CD4-positive, alpha-beta memory T cell (primary cell): ENCODE measurements at regions of chr3 and their contacts with region 1.

Region 1: DNA sequence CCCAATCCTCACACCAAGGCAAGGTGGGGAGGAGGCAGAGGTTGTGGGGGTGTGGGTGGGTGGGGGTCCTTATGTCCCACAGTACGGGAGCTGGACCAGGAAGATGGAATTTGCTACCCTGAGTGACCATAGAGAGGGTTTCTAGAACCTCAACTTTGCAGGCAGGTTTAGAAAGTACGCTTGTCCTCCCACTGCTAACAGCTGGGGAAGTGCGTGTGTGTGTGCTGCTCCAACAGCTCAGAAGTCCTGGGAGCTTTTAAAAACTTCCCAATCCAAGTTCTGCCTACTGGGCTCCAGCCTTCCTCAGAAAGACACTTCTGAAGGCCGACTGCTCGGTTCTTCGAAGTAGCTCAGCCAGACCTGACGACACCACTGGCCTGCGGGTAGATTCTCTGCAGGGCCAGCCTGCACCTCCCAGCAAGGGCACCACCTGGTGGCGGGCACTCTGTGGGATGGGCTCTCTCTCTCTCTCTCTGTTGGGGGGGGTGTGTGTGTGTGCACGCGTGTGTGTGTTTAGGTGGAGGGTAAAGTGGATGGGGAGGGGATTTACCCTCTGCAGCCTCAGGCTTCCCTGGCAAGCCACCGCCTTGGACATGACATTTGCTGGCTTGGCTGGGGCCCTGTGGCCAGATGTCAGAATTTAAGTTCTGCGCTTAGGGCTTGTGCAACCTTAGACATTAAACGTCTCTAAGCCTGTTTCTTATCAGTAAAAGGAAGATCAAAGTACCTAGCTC is 15.6 kb downstream of the TMEM158 start:
- DNase-seq: peak; percentile 73 to 82 (median 76)
- H3K4me3 ChIP-seq: no peak overlapping the region
- H3K4me3 Mint-ChIP-seq: peak overlapping the region in 2 of 8 donors; percentile 21 to 29
- H3K27ac ChIP-seq: no peak overlapping the region
- H3K27ac Mint-ChIP-seq: peak overlapping the region in 2 of 7 donors; percentile 6 to 77
- H3K4me1 ChIP-seq: peaks cover 22% of the 10 kb centered on the region
- H3K4me1 Mint-ChIP-seq: peaks cover 9 to 28% (median 20%) of the 10 kb centered on the region in 4 donors
- H3K27me3 ChIP-seq: peaks cover 5% of the 10 kb centered on the region
- H3K27me3 Mint-ChIP-seq: peaks cover 0 to 9% of the 10 kb centered on the region in 2 donors

Region 2: GRCh38 chr3:45055411-45056143 is 154.9 kb before region 1 on chr3:
- CTCF ChIA-PET with region 1: interaction called, 688 read pairs
- POLR2A ChIA-PET with region 1: no interaction called
- intact Hi-C with region 1: no loop called
- DNase-seq: no peak
- H3K4me3 ChIP-seq: no peak overlapping the region
- H3K4me3 Mint-ChIP-seq: no peak overlapping the region
- H3K27ac ChIP-seq: no peak overlapping the region
- H3K27ac Mint-ChIP-seq: no peak overlapping the region
- H3K4me1 ChIP-seq: no peaks in the 10 kb centered on the region
- H3K4me1 Mint-ChIP-seq: peaks cover 0 to 7% (median 4%) of the 10 kb centered on the region in 4 donors
- H3K27me3 ChIP-seq: no peaks in the 10 kb centered on the region
- H3K27me3 Mint-ChIP-seq: peaks cover 6 to 11% of the 10 kb centered on the region in 2 donors

Region 3: DNA sequence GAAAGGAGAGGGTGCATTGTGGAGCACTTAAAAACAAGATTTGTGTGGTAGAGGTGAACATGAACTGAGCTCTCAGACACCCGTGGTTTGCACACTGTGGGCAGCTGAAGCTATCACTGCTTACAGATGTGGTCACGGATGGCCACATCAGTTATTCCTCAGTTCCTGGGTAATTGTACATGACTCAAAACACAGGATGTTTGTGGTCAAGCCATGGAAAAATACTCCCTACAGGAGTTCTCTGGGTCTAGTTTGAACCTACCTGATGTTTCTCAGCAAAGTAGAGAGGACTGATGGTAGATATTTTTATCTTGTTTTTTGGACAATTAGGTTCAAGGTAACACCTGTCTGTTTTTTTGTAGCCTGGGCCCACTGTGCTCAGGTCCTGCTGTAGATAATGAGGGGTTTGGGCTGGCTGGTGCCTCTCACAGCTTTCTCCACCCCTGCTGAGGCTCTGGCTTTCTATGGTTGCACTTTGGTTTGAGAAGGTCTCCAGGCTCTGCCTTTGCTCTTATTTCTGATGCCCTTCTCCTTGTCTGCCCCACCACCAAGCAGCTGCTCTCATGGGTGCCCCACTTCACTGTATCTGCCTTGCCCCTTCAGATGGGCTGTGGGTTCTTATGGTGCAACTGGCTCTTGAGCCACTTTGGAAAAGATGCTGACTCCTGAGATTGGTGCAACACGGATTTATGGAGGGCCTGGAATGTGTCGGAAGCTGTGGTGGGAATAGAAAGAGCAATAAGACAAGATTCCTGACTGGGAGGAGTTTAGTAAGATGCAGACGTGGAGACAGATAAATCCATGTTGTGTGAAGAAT is 104.4 kb before region 1 on chr3:
- CTCF ChIA-PET with region 1: interaction called, 19 read pairs
- POLR2A ChIA-PET with region 1: interaction called, 4 read pairs
- intact Hi-C with region 1: loop called (anchors 5 kb)
- DNase-seq: peak; percentile 71 to 78 (median 75)
- H3K4me3 ChIP-seq: no peak overlapping the region
- H3K4me3 Mint-ChIP-seq: peak overlapping the region; percentile 9 to 74 (median 60)
- H3K27ac ChIP-seq: no peak overlapping the region
- H3K27ac Mint-ChIP-seq: peak overlapping the region; percentile 19 to 88 (median 73)
- H3K4me1 ChIP-seq: peaks cover 70% of the 10 kb centered on the region
- H3K4me1 Mint-ChIP-seq: peaks cover 50 to 75% (median 65%) of the 10 kb centered on the region in 4 donors
- H3K27me3 ChIP-seq: peaks cover 2% of the 10 kb centered on the region
- H3K27me3 Mint-ChIP-seq: peaks cover 5% of the 10 kb centered on the region in 2 donors

Region 4: DNA sequence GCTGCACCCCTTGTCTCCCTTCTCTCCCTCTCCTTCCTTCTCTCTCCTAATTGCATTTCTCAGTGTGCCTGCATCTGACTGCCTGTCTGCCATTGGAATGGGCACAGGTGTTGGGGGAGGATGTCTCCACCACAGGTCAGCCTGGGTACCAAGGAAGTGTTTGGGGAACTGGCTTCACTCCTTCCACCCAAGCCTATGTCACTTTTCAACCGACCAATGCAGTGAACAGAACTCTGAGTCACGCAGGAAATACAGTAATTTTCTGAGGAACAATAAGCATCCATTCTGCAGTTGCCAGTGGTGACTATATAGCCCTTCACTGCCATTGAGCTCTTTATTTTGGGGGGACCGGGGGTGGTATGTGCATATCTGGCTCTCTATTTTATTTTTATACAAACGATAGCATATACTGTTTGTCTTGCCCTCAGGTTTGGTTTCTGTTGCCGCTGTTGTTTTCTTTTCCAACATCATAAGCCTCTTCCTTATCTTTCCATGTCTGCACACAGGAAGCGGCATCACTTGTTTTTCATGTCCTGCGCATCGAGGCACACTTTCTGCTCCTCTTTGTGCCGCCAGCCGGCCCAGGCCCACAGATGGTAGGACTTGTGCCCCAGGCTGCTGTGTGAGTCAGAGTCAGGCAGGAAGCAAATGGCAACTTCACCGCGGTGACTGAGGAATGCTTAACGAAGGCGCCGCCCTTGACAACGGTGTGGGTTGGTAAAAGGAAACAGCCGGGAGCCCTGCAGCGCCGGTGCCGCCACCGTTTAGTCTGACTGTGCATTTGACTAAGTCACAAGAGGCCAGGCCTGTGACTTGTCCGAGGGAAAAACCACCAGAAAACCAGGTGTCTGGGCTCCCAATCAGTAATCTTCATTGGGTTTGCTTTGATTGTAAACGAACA is 43.2 kb before region 1 on chr3:
- CTCF ChIA-PET with region 1: interaction called, 18 read pairs
- POLR2A ChIA-PET with region 1: interaction called, 4 read pairs
- intact Hi-C with region 1: loop called (anchors 2 kb)
- DNase-seq: peak; percentile 71 to 90 (median 77)
- H3K4me3 ChIP-seq: peak overlapping the region; percentile 8 to 21
- H3K4me3 Mint-ChIP-seq: peak overlapping the region; percentile 67 to 91 (median 82)
- H3K27ac ChIP-seq: peak overlapping the region; percentile 39
- H3K27ac Mint-ChIP-seq: peak overlapping the region; percentile 78 to 99 (median 95)
- H3K4me1 ChIP-seq: peaks cover 24% of the 10 kb centered on the region
- H3K4me1 Mint-ChIP-seq: peaks cover 15 to 35% (median 22%) of the 10 kb centered on the region in 4 donors
- H3K27me3 ChIP-seq: no peaks in the 10 kb centered on the region
- H3K27me3 Mint-ChIP-seq: peaks cover 0 to 2% of the 10 kb centered on the region in 2 donors

Region 5: GRCh38 chr3:45191924-45192417 is 18.5 kb before region 1 on chr3:
- CTCF ChIA-PET with region 1: interaction called, 35 read pairs
- POLR2A ChIA-PET with region 1: no interaction called
- intact Hi-C with region 1: no loop called
- DNase-seq: no peak
- H3K4me3 ChIP-seq: no peak overlapping the region
- H3K4me3 Mint-ChIP-seq: no peak overlapping the region
- H3K27ac ChIP-seq: no peak overlapping the region
- H3K27ac Mint-ChIP-seq: no peak overlapping the region
- H3K4me1 ChIP-seq: no peaks in the 10 kb centered on the region
- H3K4me1 Mint-ChIP-seq: no peaks in the 10 kb centered on the region
- H3K27me3 ChIP-seq: no peaks in the 10 kb centered on the region
- H3K27me3 Mint-ChIP-seq: peaks cover 6 to 7% of the 10 kb centered on the region in 2 donors

Region 6: GRCh38 chr3:45224824-45225464 is 14.5 kb after region 1 on chr3:
- CTCF ChIA-PET with region 1: interaction called, 14 read pairs
- POLR2A ChIA-PET with region 1: interaction called, 4 read pairs
- intact Hi-C with region 1: no loop called
- DNase-seq: peak in 2 of 5 donors; percentile 8 to 46
- H3K4me3 ChIP-seq: no peak overlapping the region
- H3K4me3 Mint-ChIP-seq: peak overlapping the region; percentile 79 to 90 (median 88)
- H3K27ac ChIP-seq: no peak overlapping the region
- H3K27ac Mint-ChIP-seq: peak overlapping the region in 2 of 7 donors; percentile 66 to 82
- H3K4me1 ChIP-seq: peaks cover 11% of the 10 kb centered on the region
- H3K4me1 Mint-ChIP-seq: peaks cover 7 to 17% (median 13%) of the 10 kb centered on the region in 4 donors
- H3K27me3 ChIP-seq: peaks cover 46% of the 10 kb centered on the region
- H3K27me3 Mint-ChIP-seq: peaks cover 52 to 69% of the 10 kb centered on the region in 2 donors

Region 7: GRCh38 chr3:45567730-45568172 is 357.3 kb after region 1 on chr3:
- CTCF ChIA-PET with region 1: no interaction called
- POLR2A ChIA-PET with region 1: no interaction called
- intact Hi-C with region 1: no loop called
- DNase-seq: peak in 4 of 5 donors; percentile 12 to 60 (median 28)
- H3K4me3 ChIP-seq: no peak overlapping the region
- H3K4me3 Mint-ChIP-seq: peak overlapping the region in 5 of 8 donors; percentile 13 to 54 (median 21)
- H3K27ac ChIP-seq: no peak overlapping the region
- H3K27ac Mint-ChIP-seq: peak overlapping the region in 6 of 7 donors; percentile 30 to 81 (median 70)
- H3K4me1 ChIP-seq: peaks cover 12% of the 10 kb centered on the region
- H3K4me1 Mint-ChIP-seq: peaks cover 11 to 37% (median 20%) of the 10 kb centered on the region in 4 donors
- H3K27me3 ChIP-seq: no peaks in the 10 kb centered on the region
- H3K27me3 Mint-ChIP-seq: no peaks in the 10 kb centered on the region